Heart left ventricle (tissue), 16 donors: ENCODE measurements at regions of chr7 and their contacts with region 1.

Region 1: GRCh38 chr7:135186841-135187253 is 16.3 kb upstream of the CYREN start:
- DNase-seq: no peak
- ATAC-seq: no peak
- H3K4me3 ChIP-seq: no peak overlapping the region
- H3K27ac ChIP-seq: no peak overlapping the region
- H3K4me1 ChIP-seq: peaks cover 0 to 11% (median 0%) of the 10 kb centered on the region in 12 donors
- H3K27me3 ChIP-seq: no peaks in the 10 kb centered on the region
- CTCF ChIP-seq: no peak
- POLR2A ChIP-seq: no peak

Region 2: DNA sequence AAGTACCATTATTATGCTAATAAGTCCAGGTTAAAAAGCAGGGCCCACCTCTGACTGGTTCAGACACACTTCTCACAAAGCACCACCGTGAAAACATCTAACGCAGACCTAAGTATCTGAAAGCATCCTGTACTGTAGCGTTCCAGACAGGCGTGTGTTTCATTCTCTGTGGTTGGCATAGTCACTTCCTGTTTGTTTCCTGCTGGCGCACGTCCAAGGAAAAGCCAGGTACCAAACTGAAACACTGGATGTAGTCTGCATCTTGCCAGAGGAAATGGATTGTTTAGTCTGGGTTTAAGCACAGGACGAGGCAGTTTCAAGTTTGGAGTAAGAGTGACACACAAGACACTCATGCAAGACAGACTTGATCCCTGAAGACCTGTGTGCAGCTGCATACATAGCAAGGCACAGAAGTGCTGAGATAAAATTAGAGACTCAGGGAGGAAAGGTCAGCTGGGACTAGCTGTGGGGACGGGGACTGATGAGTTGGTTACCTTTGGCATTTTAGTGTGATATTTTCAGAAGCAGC is 516.9 kb before region 1 on chr7:
- intact Hi-C with region 1: loop called in 1 of 10 experiments (anchors 10 kb)
- DNase-seq: peak in 4 of 5 donors; percentile 23 to 59 (median 36)
- ATAC-seq: peak; percentile 32 to 86 (median 68)
- H3K4me3 ChIP-seq: peak overlapping the region in 1 of 12 donors; percentile 6
- H3K27ac ChIP-seq: peak overlapping the region in 3 of 12 donors; percentile 4 to 47 (median 15)
- H3K4me1 ChIP-seq: peaks cover 0 to 20% (median 10%) of the 10 kb centered on the region in 12 donors
- H3K27me3 ChIP-seq: no peaks in the 10 kb centered on the region
- CTCF ChIP-seq: no peak
- POLR2A ChIP-seq: no peak

Region 3: DNA sequence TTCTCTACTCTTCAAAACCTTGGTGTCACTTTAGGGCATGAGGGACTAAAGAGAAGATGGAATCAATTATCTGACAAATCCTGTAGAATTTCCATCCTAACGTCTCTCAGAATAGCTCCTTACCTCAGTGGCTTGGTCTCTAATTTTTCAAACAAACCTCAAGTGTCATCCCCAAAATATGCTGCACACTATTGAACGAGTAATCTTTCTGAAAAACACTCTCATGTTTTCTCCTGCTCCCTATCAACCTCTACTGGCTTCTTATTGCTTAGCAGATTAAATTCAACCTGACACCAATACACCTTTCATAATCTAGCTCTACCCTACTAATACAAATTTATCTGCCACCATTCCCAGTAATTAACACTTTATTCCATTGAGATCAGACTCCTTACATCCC is 314.6 kb after region 1 on chr7:
- intact Hi-C with region 1: no loop called
- DNase-seq: no peak
- ATAC-seq: no peak
- H3K4me3 ChIP-seq: no peak overlapping the region
- H3K27ac ChIP-seq: no peak overlapping the region
- H3K4me1 ChIP-seq: peaks cover 0 to 65% (median 29%) of the 10 kb centered on the region in 12 donors
- H3K27me3 ChIP-seq: no peaks in the 10 kb centered on the region
- CTCF ChIP-seq: no peak
- POLR2A ChIP-seq: no peak